CD8-positive, alpha-beta memory T cell (primary cell): ENCODE measurements at regions of chr12 and their contacts with region 1.

Region 1: GRCh38 chr12:123365025-123365917 is 624 bp upstream of the SBNO1 start:
- DNase-seq: peak; percentile 96 to 99 (median 99)
- H3K4me3 ChIP-seq: peak overlapping the region; percentile 97
- H3K4me3 Mint-ChIP-seq: peak overlapping the region; percentile 88 to 94 (median 93)
- H3K27ac ChIP-seq: peak overlapping the region; percentile 97
- H3K27ac Mint-ChIP-seq: peak overlapping the region; percentile 87 to 97 (median 95)
- H3K4me1 ChIP-seq: peaks cover 20% of the 10 kb centered on the region
- H3K4me1 Mint-ChIP-seq: peaks cover 14 to 31% (median 20%) of the 10 kb centered on the region in 3 donors
- H3K27me3 ChIP-seq: no peaks in the 10 kb centered on the region
- H3K27me3 Mint-ChIP-seq: no peaks in the 10 kb centered on the region

Region 2: GRCh38 chr12:123346946-123347345 is 18.3 kb before region 1 on chr12:
- CTCF ChIA-PET with region 1: interaction called, 11 read pairs
- POLR2A ChIA-PET with region 1: no interaction called
- DNase-seq: no peak
- H3K4me3 ChIP-seq: no peak overlapping the region
- H3K4me3 Mint-ChIP-seq: no peak overlapping the region
- H3K27ac ChIP-seq: no peak overlapping the region
- H3K27ac Mint-ChIP-seq: peak overlapping the region in 1 of 8 donors; percentile 43
- H3K4me1 ChIP-seq: no peaks in the 10 kb centered on the region
- H3K4me1 Mint-ChIP-seq: peaks cover 16 to 21% (median 17%) of the 10 kb centered on the region in 3 donors
- H3K27me3 ChIP-seq: no peaks in the 10 kb centered on the region
- H3K27me3 Mint-ChIP-seq: no peaks in the 10 kb centered on the region

Region 3: GRCh38 chr12:123354600-123354999 is 10.7 kb before region 1 on chr12:
- CTCF ChIA-PET with region 1: interaction called, 11 read pairs
- POLR2A ChIA-PET with region 1: no interaction called
- DNase-seq: no peak
- H3K4me3 ChIP-seq: no peak overlapping the region
- H3K4me3 Mint-ChIP-seq: peak overlapping the region in 1 of 7 donors; percentile 17
- H3K27ac ChIP-seq: no peak overlapping the region
- H3K27ac Mint-ChIP-seq: peak overlapping the region in 2 of 8 donors; percentile 30 to 52
- H3K4me1 ChIP-seq: peaks cover 28% of the 10 kb centered on the region
- H3K4me1 Mint-ChIP-seq: peaks cover 51 to 79% (median 63%) of the 10 kb centered on the region in 3 donors
- H3K27me3 ChIP-seq: no peaks in the 10 kb centered on the region
- H3K27me3 Mint-ChIP-seq: no peaks in the 10 kb centered on the region

Region 4: DNA sequence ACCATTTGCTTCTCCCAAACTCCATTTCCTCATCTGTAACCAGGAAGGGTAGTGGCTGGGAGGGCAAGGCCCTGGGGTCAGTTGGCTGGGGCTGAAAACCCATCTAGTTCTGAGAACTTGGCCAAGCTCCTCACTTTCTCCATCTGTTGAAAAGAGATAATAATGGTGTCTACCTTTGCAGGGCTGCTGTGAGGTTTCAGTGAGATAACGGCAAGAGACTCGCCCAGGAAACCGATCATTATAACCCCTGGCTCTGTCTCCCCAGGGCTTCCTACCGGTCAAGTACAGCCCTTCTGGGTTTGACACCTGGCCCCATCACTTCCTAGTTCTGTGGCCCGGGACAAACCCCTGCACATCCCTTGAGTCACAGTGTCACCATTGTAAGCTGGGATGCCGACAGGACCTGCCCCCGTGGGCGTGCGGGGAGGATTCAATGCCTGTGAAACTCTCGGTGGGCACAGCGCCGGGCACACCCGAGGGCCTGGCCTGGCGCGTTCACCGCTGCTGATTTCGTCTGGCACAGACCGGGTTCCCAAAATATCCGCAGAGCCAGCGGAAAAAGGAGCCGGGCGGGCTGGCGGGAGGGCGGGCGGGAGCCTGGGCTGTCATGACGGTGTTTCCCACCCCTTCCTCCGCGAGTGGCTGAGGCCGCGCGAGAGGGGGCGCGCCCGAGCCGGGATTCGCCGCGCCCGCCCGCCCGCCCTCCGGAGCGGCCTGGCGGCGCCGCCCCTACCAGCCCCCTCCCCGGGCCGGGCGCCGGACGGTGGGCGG is 23.1 kb after region 1 on chr12:
- CTCF ChIA-PET with region 1: interaction called, 66 read pairs
- POLR2A ChIA-PET with region 1: interaction called, 23 read pairs
- DNase-seq: peak; percentile 67 to 83 (median 76)
- H3K4me3 ChIP-seq: peak overlapping the region; percentile 83
- H3K4me3 Mint-ChIP-seq: peak overlapping the region; percentile 86 to 96 (median 90)
- H3K27ac ChIP-seq: peak overlapping the region; percentile 65
- H3K27ac Mint-ChIP-seq: peak overlapping the region; percentile 70 to 98 (median 92)
- H3K4me1 ChIP-seq: peaks cover 27% of the 10 kb centered on the region
- H3K4me1 Mint-ChIP-seq: peaks cover 42 to 56% (median 47%) of the 10 kb centered on the region in 3 donors
- H3K27me3 ChIP-seq: no peaks in the 10 kb centered on the region
- H3K27me3 Mint-ChIP-seq: no peaks in the 10 kb centered on the region